AG04449 (cell line): ENCODE measurements at regions of chr20 and their contacts with region 1.

Region 1: DNA sequence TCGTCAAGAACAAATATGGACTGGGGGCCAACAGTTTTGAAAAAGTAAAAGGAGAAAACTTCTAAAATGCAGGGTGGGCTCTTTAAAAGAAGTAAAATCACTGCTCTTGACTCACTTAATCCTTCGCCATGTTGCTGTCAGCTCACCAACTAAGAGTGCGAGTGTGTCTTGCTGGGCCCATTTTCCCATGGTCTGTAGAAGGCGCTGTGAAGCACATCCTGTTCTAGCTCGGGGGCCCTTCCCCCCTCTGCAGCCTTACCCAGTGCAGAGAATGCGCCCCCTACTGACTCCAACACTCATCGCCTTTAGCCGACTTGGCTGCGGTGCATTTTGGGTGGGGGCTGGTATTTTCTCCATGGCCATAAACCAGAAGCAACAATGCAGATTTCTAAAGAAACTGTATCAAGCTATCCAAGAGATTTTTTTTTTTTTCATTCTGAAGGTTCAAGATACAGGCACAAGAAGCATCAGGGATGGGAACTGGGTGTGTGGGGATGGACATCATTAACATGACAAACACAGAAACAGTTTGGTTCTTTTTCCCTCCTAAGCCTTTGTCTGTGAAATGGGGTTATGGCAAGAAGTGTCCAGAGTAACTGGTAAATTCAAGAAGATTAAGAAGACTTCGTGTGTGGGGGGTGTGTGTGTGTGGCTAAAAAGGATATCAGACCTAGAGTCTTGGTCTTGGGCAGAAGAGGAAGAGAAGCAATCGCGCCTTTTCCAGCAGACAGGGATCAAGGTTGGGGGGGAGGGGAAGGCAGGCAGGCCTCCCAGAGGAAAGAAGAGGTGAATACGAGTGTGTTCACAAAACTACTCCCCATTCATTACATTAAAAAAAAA is 1.7 kb downstream of the ADNP start:
- DNase-seq: peak; percentile 78
- H3K4me3 ChIP-seq: peak overlapping the region; percentile 79
- CTCF ChIP-seq: peak; percentile 97

Region 2: DNA sequence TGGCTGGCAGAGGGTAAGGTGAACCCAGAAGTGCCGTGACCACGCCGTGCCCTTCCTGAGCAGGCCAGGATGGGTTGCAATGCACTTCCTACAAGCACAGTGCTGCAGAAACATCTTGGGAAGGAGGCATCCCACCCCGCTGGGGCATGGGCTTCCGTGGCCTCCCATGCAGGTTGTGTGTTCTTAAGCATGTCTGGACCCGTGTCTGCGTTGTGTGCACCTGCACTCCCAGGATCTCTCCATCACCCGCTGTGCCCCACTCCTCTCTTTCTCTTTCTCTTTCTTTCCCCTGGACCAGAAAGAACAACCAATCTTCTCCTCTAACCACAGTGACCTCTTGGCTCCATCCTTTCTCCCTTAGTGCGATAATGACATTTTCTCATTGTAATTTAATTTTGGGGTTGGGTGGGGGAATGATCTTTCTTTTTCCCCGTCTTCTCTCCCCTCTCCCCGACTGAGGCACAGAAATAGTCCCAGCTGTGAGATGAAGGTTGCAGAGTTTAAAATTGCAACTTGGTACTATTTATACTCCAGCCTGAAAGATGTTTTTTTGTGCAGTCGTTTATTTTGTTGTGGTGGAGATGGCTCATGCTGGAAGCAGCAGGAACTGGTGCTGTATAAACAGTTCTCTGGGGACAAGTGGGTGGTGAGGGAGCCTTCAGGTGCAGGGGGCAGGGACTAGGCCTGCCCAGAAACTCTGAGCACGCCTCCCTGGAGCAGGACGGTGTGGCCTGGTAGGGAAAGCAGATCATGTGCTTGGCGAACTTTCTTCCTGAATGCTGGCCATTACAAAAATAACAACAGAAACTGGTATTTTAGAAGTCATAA is 114.1 kb before region 1 on chr20:
- CTCF ChIA-PET with region 1: interaction called, 80 read pairs
- POLR2A ChIA-PET with region 1: interaction called, 7 read pairs
- DNase-seq: peak; percentile 38
- H3K4me3 ChIP-seq: no peak overlapping the region
- CTCF ChIP-seq: no peak

Region 3: DNA sequence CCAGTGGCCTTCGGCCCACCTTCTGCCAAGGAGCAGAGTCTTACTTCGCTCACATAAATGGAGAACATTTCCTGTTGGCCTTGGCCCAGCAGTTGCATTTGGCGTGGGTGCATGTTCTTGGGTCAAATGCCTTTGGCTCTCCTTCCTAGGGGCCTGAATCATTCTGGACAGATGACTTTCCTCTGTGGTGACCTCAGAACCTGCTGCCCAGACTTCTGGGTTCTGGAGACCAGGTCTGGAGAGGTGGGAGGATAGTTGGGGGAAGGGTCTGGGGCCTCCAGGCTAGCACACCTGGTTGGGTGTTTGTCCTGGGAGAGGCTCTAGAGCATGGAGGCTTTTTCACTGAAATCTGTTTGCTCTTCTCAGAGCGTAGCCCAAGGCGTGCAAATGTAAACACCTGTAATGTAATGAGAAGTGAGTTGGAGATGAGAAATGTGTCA is 105.3 kb before region 1 on chr20:
- CTCF ChIA-PET with region 1: interaction called, 80 read pairs
- POLR2A ChIA-PET with region 1: no interaction called
- DNase-seq: no peak
- H3K4me3 ChIP-seq: no peak overlapping the region
- CTCF ChIP-seq: no peak

Region 4: GRCh38 chr20:50891138-50891537 is 38.4 kb before region 1 on chr20:
- CTCF ChIA-PET with region 1: interaction called, 19 read pairs
- POLR2A ChIA-PET with region 1: interaction called, 3 read pairs
- DNase-seq: no peak
- H3K4me3 ChIP-seq: no peak overlapping the region
- CTCF ChIP-seq: no peak

Region 5: DNA sequence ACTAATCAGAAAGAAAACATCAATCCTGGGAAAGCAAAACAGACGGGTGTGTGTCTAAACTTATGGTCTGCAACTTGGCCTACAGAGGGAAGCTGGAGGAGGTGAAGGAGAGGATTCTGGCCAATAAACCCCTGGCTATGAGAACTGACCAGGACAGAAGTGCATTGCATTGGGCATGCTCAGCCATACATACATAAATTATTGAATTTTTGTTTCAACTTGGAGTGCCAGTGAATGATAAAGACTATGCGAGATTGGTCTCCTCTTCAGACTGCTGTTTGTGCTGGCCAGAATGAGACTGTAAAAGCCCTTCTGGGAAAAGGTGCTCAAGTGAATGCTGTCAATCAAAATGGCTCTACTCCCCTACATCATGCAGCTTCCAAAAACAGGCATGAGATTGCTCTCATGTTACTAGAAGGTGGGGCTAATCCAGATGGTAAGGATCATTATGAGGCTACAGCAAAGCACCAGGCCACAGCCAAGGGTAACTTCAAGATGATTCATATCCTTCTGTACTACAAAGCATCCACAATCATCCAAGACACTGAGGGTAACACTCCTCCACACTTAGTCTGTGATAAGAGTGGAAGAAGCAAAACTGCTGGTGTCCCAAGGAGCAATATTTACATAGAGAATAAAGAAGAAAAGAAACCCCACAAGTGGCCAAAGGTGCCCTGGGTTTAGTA is 15.7 kb before region 1 on chr20:
- CTCF ChIA-PET with region 1: interaction called, 123 read pairs
- POLR2A ChIA-PET with region 1: interaction called, 6 read pairs
- DNase-seq: no peak
- H3K4me3 ChIP-seq: no peak overlapping the region
- CTCF ChIP-seq: no peak

Region 6: GRCh38 chr20:50943069-50943468 is 13.6 kb after region 1 on chr20:
- CTCF ChIA-PET with region 1: interaction called, 15 read pairs
- POLR2A ChIA-PET with region 1: interaction called, 7 read pairs
- DNase-seq: no peak
- H3K4me3 ChIP-seq: no peak overlapping the region
- CTCF ChIP-seq: no peak

Region 7: DNA sequence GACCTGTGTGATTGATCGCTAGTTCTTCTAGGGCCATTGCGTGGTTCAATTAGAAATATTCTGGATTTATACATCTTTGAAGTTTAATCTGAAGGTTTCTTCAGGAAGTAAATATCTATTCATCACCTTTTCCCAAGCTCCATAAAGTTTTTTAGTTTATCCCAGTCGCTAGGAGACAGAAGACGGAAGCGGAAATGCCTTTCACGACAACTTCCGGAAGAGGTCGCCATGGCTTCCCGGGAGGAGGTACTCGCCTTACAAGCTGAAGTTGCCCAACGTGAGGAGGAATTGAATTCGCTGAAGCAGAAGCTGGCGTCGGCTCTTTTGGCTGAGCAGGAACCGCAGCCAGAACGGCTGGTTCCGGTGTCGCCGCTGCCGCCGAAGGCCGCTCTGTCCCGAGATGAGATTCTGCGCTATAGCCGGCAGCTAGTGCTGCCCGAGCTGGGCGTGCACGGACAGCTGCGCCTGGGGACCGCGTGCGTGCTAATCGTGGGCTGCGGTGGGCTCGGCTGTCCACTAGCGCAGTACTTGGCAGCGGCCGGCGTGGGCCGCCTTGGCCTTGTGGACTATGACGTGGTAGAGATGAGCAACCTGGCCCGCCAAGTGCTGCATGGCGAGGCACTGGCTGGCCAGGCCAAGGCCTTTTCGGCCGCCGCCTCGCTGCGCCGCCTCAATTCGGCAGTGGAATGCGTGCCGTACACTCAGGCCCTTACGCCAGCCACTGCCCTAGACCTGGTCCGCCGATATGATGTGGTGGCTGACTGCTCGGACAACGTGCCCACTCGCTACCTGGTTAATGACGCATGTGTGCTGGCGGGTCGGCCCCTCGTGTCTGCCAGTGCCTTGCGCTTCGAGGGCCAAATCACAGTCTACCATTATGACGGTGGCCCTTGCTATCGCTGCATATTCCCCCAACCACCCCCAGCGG is 29.4 kb after region 1 on chr20 and contains the start of gene MOCS3:
- CTCF ChIA-PET with region 1: interaction called, 3 read pairs
- POLR2A ChIA-PET with region 1: interaction called, 18 read pairs
- DNase-seq: peak; percentile 63
- H3K4me3 ChIP-seq: peak within 1 kb of the TSS; percentile 98
- CTCF ChIP-seq: no peak